Activated CD4-positive, alpha-beta T cell treated with anti-CD3 and anti-CD28 coated beads for 36 hours (primary cell): ENCODE measurements at regions of chr2 and their contacts with region 1.

Region 1: DNA sequence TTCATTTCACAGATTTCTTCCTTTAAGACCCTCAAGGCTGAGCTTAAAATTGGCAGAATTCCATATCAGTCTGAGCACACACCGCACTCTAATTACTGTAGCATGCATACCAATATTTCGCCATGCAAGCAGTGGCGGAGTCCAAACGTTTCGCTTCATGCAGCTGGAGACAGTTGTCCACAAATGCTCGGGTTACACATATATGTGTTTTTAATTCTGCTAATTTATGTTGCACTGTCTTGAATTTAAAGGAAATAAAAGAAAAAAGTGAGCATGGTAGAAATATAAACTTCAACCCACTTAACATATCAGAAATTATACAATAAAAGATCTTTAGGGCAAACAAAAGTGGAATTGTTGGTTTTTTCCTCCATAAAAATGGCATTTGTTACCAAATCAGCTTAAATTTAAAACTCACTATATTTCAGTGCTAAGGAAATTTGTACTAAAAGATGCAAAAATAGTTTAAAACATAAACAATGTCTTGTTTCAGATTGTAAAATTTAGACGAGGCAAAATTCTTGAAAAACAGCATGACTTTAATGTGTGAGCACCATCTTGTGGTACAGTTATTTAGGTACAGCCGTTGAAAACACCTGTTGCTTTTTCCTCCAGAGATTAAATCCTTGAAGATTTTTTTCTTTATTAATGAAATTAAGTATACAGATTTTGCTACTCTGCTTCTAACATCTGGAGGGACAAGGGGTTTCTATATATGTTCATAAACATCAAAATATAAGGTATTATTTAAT is 24.1 kb upstream of the KANSL1L start:
- DNase-seq: no peak
- ATAC-seq: no peak
- H3K4me3 Mint-ChIP-seq: no peak overlapping the region
- H3K27ac Mint-ChIP-seq: no peak overlapping the region
- H3K4me1 Mint-ChIP-seq: no peaks in the 10 kb centered on the region
- H3K27me3 Mint-ChIP-seq: no peaks in the 10 kb centered on the region

Region 2: GRCh38 chr2:208399202-208399601 is 1796.1 kb before region 1 on chr2:
- CTCF ChIA-PET with region 1: no interaction called
- POLR2A ChIA-PET with region 1: no interaction called
- intact Hi-C with region 1: loop called in 1 of 2 experiments (anchors 5 kb)
- DNase-seq: no peak
- ATAC-seq: no peak
- H3K4me3 Mint-ChIP-seq: no peak overlapping the region
- H3K27ac Mint-ChIP-seq: no peak overlapping the region
- H3K4me1 Mint-ChIP-seq: no peaks in the 10 kb centered on the region
- H3K27me3 Mint-ChIP-seq: peaks cover 21% of the 10 kb centered on the region

Region 3: GRCh38 chr2:209790066-209790728 is 405.1 kb before region 1 on chr2:
- CTCF ChIA-PET with region 1: no interaction called
- POLR2A ChIA-PET with region 1: no interaction called
- intact Hi-C with region 1: loop called in 1 of 2 experiments (anchors 10 kb)
- DNase-seq: no peak
- ATAC-seq: no peak
- H3K4me3 Mint-ChIP-seq: no peak overlapping the region
- H3K27ac Mint-ChIP-seq: no peak overlapping the region
- H3K4me1 Mint-ChIP-seq: peaks cover 11% of the 10 kb centered on the region
- H3K27me3 Mint-ChIP-seq: no peaks in the 10 kb centered on the region

Region 4: DNA sequence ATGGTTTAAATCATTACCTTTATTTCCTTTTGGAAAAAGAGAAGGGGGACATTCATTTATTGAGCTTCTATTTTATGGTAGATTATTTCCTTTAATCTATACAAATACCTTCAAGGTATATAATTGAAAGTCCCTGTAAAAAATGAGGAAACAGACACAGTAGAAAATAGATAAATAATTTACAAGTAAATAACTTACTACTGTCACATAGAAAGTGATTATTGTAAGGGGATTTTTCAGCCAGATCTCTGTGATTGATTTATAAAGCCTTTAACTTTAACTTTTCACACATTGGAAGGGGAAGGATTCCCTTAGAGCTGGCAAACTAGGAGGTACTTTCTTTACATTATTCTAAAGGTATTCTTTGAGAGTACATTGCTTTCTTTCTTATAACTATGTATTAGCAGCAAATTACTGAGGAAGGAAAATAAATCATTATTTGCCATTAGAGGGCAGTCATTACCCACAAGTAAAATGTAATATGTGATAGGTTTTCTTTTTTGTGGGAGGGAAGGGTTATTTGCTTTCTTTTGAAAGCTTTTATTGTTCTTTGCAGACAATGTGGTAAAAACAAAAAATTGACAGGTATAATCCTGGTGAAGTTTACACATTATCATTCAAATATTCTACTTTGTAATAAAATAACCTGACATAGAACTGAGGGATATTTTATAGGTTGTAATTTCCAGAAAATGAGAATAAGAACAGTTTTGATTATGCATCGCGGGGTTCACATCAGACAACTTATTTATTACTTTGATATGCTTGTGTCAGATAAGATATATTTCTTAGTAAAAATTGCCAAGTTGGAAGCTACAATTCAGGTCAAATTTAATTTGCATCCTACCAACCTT is 217.7 kb before region 1 on chr2:
- CTCF ChIA-PET with region 1: interaction called, 44 read pairs
- POLR2A ChIA-PET with region 1: no interaction called
- intact Hi-C with region 1: loop called (anchors 1 kb)
- DNase-seq: no peak
- ATAC-seq: no peak
- H3K4me3 Mint-ChIP-seq: no peak overlapping the region
- H3K27ac Mint-ChIP-seq: no peak overlapping the region
- H3K4me1 Mint-ChIP-seq: no peaks in the 10 kb centered on the region
- H3K27me3 Mint-ChIP-seq: peaks cover 3% of the 10 kb centered on the region

Region 5: DNA sequence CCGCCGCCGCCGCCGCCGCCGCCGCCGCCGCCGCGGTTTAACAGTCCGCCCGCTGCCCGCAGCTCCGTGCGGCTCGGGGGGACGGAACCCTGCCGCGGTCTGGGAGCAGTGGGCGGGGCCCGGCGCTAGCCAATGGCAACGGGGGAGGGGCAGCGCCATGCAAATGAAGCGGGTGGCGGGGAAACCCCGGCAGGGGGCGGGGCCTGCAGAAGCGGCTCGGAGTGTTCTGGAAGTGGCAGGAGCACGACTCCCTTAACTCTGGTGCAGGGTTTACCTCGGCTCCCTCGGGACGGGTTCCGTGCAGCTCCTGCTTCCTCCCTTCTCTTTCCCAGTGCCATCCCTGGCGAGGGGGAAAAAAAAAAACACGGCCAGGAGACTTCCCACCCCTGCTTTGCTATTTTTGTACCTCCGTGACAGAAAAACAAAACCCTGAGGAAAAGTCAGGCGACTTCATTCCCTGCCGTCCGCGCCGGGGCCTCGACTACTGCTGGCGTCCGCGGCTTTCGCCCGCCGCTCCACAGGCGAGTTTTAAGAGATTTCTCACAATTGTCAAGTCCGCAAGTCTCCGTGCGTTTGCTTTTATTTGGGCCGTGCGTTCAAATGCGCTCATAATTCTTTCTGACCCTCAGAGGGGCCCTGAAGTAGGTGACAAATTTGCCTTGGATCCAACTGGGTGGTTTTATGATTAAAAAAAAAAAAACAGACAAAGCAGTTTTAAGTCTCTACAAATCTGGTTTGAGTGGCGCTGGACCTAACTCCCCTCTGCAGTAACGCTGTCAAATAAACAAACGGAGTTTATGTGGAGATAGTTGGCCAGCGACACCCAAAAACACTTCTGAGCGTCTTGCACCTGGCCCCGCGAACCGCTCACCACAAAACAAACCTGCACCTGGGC is 23.7 kb before region 1 on chr2 and contains the start of gene KANSL1L:
- CTCF ChIA-PET with region 1: interaction called, 4 read pairs
- POLR2A ChIA-PET with region 1: no interaction called
- intact Hi-C with region 1: loop called in 1 of 2 experiments (anchors 1 kb)
- DNase-seq: peak; percentile 97
- ATAC-seq: peak; percentile 75
- H3K4me3 Mint-ChIP-seq: peak within 1 kb of the TSS; percentile 98
- H3K27ac Mint-ChIP-seq: peak within 1 kb of the TSS; percentile 97
- H3K4me1 Mint-ChIP-seq: peaks cover 33% of the 10 kb centered on the region
- H3K27me3 Mint-ChIP-seq: peaks cover 4% of the 10 kb centered on the region
- total RNA-seq, gene KANSL1L: 4.5 to 6.0 TPM

Region 6: DNA sequence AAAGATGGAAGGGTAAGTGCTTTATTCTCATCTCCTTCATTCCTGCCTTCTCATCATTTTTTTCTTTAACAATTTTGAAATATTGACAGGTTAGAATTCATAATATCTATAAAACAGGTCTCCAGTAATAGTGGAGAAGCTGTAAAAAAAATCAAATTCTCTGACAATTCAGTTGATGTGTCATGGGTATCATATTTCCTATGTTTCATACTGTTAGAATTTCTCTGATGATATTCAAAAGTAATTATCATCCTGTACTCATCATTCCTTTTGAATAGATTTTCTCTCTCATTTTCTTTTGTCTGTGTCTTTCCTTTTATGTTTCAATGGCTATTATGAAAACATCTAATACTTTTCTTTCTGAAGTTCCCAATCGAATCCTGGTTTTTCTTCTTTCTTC is 458.8 kb after region 1 on chr2:
- CTCF ChIA-PET with region 1: no interaction called
- POLR2A ChIA-PET with region 1: no interaction called
- intact Hi-C with region 1: no loop called
- DNase-seq: no peak
- ATAC-seq: no peak
- H3K4me3 Mint-ChIP-seq: no peak overlapping the region
- H3K27ac Mint-ChIP-seq: no peak overlapping the region
- H3K4me1 Mint-ChIP-seq: no peaks in the 10 kb centered on the region
- H3K27me3 Mint-ChIP-seq: no peaks in the 10 kb centered on the region